ENCODE measurements at regions of chr18 and their contacts with region 1.

Region 1: DNA sequence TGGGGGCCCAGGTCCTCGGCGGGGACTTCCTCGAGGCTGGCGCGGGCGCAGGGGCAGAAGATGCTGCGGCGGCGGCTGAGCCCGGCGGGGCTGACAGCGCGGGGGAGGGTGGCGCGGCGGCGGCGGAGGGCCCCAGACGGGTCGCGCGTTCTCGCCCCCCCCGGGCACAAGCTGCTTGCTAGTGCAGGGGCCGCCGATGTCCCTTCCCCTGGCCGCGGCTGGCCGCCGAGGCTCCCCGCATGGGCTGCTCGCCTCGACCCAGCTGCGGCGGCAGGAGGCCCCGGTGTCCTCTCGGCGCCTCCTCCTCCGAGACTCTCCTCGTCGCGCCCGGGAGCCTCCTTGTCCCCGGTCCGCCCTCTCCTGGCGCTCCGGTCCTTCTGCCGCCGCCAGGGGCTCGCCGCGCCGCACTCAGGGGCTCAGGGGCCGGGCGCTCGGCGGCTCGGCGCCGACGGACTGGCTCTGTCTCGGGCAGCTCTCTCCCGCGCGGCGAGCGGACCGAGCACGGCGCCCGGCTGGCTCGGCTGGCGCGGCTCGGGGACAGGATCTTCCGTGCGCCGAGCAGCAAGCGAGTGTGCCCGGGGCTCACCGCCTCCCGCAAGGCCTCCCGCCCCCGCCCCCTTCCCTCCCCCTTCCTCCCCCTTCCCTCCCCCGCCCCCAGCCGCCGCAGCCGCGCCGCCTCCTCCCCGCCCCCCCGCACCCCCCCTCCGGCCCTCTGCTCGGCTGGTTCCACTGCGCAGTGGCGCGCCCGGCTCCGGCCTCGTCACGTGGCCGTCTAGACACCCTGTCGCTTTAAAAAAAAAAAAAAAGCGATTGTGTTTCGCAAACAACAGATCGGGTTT is 902 bp upstream of the SMAD7 start:
- DNase-seq: peak; percentile 86 to 89
- ATAC-seq: peak; percentile 70 to 87 (median 82)
- H3K4me3 ChIP-seq: peak overlapping the region; percentile 68 to 96 (median 92)
- H3K27ac ChIP-seq: peak overlapping the region; percentile 93 to 100 (median 98)
- H3K4me1 ChIP-seq: peaks cover 5 to 55% (median 46%) of the 10 kb centered on the region in 9 donors
- H3K27me3 ChIP-seq: no peaks in the 10 kb centered on the region
- CTCF ChIP-seq: peak in 6 of 9 donors; percentile 13 to 56 (median 34)

Region 2: GRCh38 chr18:48680339-48681221 is 271.1 kb before region 1 on chr18:
- intact Hi-C with region 1: loop called in 8 of 10 experiments (anchors 2 to 10 kb)
- DNase-seq: peak; percentile 86 to 93
- ATAC-seq: peak; percentile 82 to 95 (median 93)
- H3K4me3 ChIP-seq: no peak overlapping the region
- H3K27ac ChIP-seq: peak overlapping the region; percentile 70 to 93 (median 86)
- H3K4me1 ChIP-seq: peaks cover 16 to 96% (median 63%) of the 10 kb centered on the region in 9 donors
- H3K27me3 ChIP-seq: no peaks in the 10 kb centered on the region
- CTCF ChIP-seq: peak in 7 of 9 donors; percentile 10 to 60 (median 42)

Region 3: GRCh38 chr18:48777026-48777743 is 174.5 kb before region 1 on chr18:
- intact Hi-C with region 1: loop called in 7 of 10 experiments (anchors 1 to 10 kb)
- DNase-seq: peak in 1 of 2 donors; percentile 72
- ATAC-seq: peak in 6 of 8 donors; percentile 5 to 27 (median 18)
- H3K4me3 ChIP-seq: no peak overlapping the region
- H3K27ac ChIP-seq: peak overlapping the region in 4 of 10 donors; percentile 27 to 99 (median 60)
- H3K4me1 ChIP-seq: peaks cover 43 to 88% (median 70%) of the 10 kb centered on the region in 9 donors
- H3K27me3 ChIP-seq: no peaks in the 10 kb centered on the region
- CTCF ChIP-seq: peak; percentile 82 to 96 (median 90)

Region 4: GRCh38 chr18:48827291-48828193 is 124.1 kb before region 1 on chr18:
- intact Hi-C with region 1: loop called in 1 of 10 experiments (anchors 10 kb)
- DNase-seq: peak in 1 of 2 donors; percentile 30
- ATAC-seq: peak; percentile 16 to 67 (median 52)
- H3K4me3 ChIP-seq: peak overlapping the region in 5 of 10 donors; percentile 2 to 27 (median 20)
- H3K27ac ChIP-seq: peak overlapping the region in 8 of 10 donors; percentile 18 to 76 (median 52)
- H3K4me1 ChIP-seq: peaks cover 18 to 81% (median 52%) of the 10 kb centered on the region in 9 donors
- H3K27me3 ChIP-seq: no peaks in the 10 kb centered on the region
- CTCF ChIP-seq: no peak

Region 5: GRCh38 chr18:48934723-48935432 is 16.8 kb before region 1 on chr18:
- intact Hi-C with region 1: loop called in 1 of 10 experiments (anchors 2 kb)
- DNase-seq: peak; percentile 73 to 86
- ATAC-seq: peak; percentile 45 to 81 (median 76)
- H3K4me3 ChIP-seq: peak overlapping the region in 7 of 10 donors; percentile 15 to 44 (median 28)
- H3K27ac ChIP-seq: peak overlapping the region; percentile 59 to 96 (median 85)
- H3K4me1 ChIP-seq: peaks cover 79 to 98% (median 96%) of the 10 kb centered on the region in 9 donors
- H3K27me3 ChIP-seq: no peaks in the 10 kb centered on the region
- CTCF ChIP-seq: no peak

Region 6: GRCh38 chr18:49178736-49179135 is 227.1 kb after region 1 on chr18:
- intact Hi-C with region 1: loop called in 2 of 10 experiments (anchors 10 kb)
- DNase-seq: peak in 1 of 2 donors; percentile 35
- ATAC-seq: peak in 2 of 8 donors; percentile 40 to 56
- H3K4me3 ChIP-seq: no peak overlapping the region
- H3K27ac ChIP-seq: no peak overlapping the region
- H3K4me1 ChIP-seq: peaks cover 0 to 25% (median 7%) of the 10 kb centered on the region in 9 donors
- H3K27me3 ChIP-seq: no peaks in the 10 kb centered on the region
- CTCF ChIP-seq: peak in 8 of 9 donors; percentile 16 to 67 (median 56)